ENCODE measurements at regions of chr10 and their contacts with region 1.

Region 1: DNA sequence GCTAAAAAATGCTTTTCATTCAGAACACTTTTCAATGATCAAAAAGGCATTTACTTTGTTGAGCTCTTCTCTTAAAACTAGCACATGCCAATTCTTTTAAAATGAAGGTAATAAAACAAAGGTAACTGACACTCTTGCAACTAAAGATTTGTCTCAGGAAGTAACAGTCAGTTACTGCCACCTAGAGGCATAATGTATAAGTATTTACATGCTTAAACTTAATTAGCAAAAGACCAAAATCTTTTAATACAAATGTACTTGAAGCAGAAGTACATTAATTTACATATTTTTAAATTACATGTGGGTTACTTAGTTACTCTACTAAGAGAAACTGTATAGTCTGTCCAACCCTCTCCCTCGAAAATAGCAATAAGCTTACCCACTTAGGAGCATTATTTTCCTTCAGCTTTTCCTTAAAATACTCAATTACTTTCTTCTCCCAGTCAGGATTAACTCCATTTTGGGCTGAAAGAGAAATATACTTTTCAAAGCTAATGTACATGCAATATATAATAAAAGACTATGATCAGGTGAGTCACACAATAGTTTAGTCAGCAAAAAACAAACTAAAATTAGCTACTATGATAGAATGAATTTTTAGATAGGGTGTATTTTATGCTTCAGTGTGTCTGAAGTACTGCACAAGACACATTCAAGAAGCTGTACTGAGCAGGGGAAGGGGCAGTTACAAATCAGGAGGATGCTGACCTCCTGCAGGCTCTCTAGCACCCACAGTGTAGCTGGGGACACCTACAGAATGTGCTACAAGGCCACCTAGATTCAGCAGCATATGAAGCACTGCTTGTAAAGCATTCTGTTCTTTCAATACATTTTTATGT is 13.0 kb downstream of the MCMBP start:
- DNase-seq: no peak
- H3K4me3 ChIP-seq: no peak overlapping the region
- H3K27ac ChIP-seq: no peak overlapping the region
- H3K4me1 ChIP-seq: peaks cover 7 to 26% (median 18%) of the 10 kb centered on the region in 4 donors
- H3K27me3 ChIP-seq: no peaks in the 10 kb centered on the region
- CTCF ChIP-seq: peak; percentile 62 to 68 (median 64)
- EP300 ChIP-seq: no peak
- POLR2A ChIP-seq: no peak

Region 2: GRCh38 chr10:119608316-119609155 is 251.1 kb before region 1 on chr10:
- intact Hi-C with region 1: loop called (anchors 10 kb)
- DNase-seq: no peak
- H3K4me3 ChIP-seq: peak overlapping the region in 2 of 4 donors; percentile 8 to 32
- H3K27ac ChIP-seq: no peak overlapping the region
- H3K4me1 ChIP-seq: peaks cover 6 to 9% (median 7%) of the 10 kb centered on the region in 4 donors
- H3K27me3 ChIP-seq: no peaks in the 10 kb centered on the region
- CTCF ChIP-seq: peak; percentile 76 to 77 (median 76)
- EP300 ChIP-seq: no peak
- POLR2A ChIP-seq: no peak

Region 3: DNA sequence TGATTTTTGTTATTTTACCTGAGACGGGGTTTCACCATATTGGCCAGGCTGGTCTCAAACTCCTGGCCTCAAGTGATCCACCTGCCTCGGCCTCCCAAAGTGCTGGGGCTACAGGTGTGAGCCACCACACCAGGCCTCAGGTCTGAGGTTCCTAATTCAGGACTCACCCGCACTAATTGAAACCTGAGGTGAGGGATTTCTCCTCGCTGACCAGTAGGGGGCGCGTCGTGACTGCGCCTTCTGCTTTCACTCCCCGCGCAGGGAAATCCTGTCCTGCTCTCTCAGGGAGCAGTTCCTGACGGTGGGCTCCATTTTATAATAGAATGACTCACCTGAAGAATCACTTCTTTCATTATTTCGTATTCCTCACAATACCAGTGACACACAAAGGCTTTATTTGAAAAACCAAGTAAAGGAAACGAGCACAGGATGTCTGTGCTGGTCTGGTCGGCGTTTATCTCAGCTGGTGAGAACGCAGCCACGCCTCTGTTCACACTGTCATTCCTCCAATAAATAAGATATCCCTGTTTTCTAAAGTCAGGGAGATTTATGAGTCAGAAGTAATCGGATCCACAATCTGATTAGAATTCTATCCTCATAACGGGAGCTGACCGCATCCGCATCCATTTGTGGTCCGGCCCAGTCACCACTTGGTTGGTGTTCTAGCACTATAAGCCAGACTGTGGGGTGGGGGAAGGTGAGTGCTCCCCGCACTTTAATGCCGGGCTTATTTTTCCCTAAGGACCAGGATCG is 173.0 kb before region 1 on chr10:
- intact Hi-C with region 1: loop called (anchors 2 kb)
- DNase-seq: no peak
- H3K4me3 ChIP-seq: peak overlapping the region; percentile 18 to 40 (median 35)
- H3K27ac ChIP-seq: peak overlapping the region; percentile 12 to 62 (median 40)
- H3K4me1 ChIP-seq: peaks cover 20 to 23% (median 21%) of the 10 kb centered on the region in 4 donors
- H3K27me3 ChIP-seq: no peaks in the 10 kb centered on the region
- CTCF ChIP-seq: peak; percentile 90 to 96 (median 92)
- EP300 ChIP-seq: no peak
- POLR2A ChIP-seq: no peak

Region 4: DNA sequence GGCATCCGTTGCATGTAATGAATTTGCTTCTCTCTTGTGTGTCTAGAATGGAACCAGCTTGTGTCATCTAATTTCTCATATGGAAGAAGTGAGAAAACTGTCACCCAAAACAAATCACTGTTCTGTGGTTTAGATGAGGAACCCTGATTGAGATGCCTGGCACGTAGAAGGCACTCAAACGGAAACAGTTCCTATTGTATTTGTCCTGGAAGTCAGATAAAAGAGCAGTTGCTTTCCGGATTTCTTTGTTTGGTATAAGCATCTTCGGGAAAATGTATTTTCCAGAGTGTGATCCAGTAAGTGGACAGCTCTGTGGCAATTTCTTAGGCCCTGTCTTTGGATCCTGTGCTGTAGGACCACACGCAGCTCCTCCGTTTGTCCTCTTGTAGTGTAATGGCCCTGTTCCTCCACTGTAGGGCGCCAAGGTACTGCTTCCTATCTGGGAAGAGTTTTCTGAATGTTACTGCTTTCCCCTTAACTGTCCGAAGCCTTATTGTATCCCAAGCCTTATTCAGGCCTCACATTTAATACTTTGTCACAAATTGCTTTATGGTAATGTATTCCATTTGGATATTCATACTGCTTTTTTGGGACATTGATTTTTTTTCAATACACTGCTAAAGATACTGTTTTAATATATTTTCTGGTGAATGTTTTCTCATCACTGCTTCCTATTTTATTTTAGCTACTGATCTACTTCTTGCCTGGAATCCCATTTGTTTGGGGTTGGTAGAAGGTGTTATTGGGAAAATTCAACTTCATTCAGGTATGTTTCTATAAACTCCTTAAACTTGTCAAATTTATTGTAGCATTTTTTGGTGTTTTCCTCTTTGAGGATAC is 109.0 kb before region 1 on chr10:
- intact Hi-C with region 1: loop called (anchors 5 kb)
- DNase-seq: no peak
- H3K4me3 ChIP-seq: no peak overlapping the region
- H3K27ac ChIP-seq: peak overlapping the region in 2 of 4 donors; percentile 5 to 29
- H3K4me1 ChIP-seq: peaks cover 5 to 39% (median 29%) of the 10 kb centered on the region in 4 donors
- H3K27me3 ChIP-seq: no peaks in the 10 kb centered on the region
- CTCF ChIP-seq: peak; percentile 90 to 93 (median 91)
- EP300 ChIP-seq: no peak
- POLR2A ChIP-seq: no peak

Region 5: DNA sequence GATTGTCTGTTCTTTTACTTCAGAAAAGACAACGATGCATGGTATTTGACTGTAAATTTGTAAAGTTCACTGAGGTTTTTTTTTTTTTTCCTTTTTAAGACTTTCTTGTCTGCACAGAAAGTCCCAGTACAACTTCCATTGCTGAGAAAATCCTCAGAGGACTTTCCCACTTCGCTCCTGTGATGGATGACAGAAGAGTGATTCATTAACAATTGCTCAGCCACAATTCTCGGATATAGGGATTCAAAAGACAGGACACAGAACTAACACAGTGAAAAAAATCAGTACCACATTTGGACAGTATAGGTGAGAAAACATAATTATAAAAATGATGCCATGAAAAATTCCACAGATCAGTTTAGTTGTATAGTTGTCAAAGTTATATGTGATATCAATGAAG is 80.8 kb after region 1 on chr10:
- intact Hi-C with region 1: no loop called
- DNase-seq: no peak
- H3K4me3 ChIP-seq: no peak overlapping the region
- H3K27ac ChIP-seq: no peak overlapping the region
- H3K4me1 ChIP-seq: no peaks in the 10 kb centered on the region
- H3K27me3 ChIP-seq: no peaks in the 10 kb centered on the region
- CTCF ChIP-seq: no peak
- EP300 ChIP-seq: no peak
- POLR2A ChIP-seq: no peak

Measured in esophagus muscularis mucosa (tissue), 4 donors.